Lower leg skin (tissue), 4 donors: ENCODE measurements at regions of chr4 and their contacts with region 1.

Region 1: DNA sequence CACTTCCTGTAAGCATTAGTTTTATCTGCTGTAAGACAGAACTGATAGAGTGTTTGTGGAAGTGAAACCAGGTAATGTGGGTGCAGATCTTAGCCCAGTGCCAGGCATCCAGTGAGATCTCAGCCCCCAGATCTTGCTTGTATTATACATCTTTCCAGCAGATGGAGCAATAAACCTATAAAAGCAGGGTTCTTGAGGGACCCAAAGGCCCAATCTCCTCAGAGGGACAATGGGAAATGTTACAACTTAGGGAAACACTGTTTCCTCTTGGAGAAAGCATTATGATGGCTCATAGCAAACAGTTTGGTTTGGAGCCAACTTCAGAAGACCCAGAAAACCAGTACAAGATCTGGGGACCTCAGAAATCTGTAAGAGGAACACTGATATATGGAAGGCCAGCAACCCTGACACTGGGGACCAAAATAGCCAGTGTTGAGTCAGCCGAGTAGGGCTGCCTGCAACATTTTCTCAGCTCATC is 206.3 kb downstream of the SLC7A11 start:
- DNase-seq: no peak
- H3K4me3 ChIP-seq: no peak overlapping the region
- CTCF ChIP-seq: no peak
- POLR2A ChIP-seq: no peak

Region 2: GRCh38 chr4:138680989-138681604 is 645.3 kb after region 1 on chr4:
- intact Hi-C with region 1: loop called (anchors 10 kb)
- DNase-seq: peak; percentile 64 to 95
- H3K4me3 ChIP-seq: no peak overlapping the region
- CTCF ChIP-seq: peak in 1 of 3 donors; percentile 67
- POLR2A ChIP-seq: no peak